ENCODE measurements at regions of chr7 and their contacts with region 1.

Region 1: DNA sequence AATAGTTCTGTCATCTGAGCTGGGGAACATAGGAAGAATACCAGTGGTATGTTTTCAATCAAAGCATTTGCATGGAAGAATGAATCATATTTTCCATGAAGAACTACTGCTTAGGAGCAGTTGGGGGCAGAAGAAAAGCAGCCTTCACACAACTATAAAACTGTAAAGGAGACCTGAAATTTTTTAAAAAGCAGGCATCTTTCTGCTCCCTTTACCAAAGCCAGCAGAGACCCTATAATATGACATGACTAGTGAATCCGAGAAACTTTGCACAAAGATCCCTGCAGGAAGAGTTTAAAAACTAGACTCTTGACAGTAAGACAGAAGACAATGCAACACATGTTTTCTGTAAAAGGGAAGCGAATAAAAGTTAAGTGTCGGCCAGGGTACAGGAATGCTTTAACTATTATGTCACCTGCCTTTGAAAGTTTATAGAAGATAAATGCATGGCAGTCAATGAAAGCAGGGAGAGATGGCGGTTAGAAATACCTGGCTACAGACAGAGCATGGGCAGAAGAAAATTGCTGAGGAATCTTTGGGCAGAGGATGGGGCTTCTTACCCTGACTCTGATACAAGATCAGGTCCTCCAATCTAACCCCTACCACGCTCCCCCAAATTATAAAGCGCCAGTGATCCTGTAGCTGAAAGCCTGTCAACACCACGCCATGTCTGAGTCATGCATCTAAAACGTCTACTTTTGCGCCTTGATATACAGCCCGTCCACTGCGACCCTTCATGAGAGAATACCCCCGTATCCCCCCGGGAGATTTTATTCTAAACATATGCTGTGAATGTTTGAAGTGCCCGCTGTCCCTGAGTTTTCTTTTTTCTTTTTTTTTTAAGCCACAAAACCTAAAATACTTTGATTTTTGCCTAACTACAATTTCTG is 93.1 kb downstream of the GLI3 start:
- DNase-seq: no peak
- ATAC-seq: no peak
- H3K4me3 ChIP-seq: no peak overlapping the region
- H3K27ac ChIP-seq: no peak overlapping the region
- H3K4me1 ChIP-seq: no peaks in the 10 kb centered on the region
- H3K27me3 ChIP-seq: no peaks in the 10 kb centered on the region

Region 2: GRCh38 chr7:42237162-42237821 is 93.3 kb after region 1 on chr7 and contains the start of gene GLI3:
- intact Hi-C with region 1: loop called in 1 of 2 experiments (anchors 10 kb)
- DNase-seq: peak; percentile 90 to 94
- ATAC-seq: peak; percentile 88
- H3K4me3 ChIP-seq: peak within 1 kb of the TSS; percentile 86 to 90
- H3K27ac ChIP-seq: peak within 1 kb of the TSS; percentile 68 to 91
- H3K4me1 ChIP-seq: no peaks in the 10 kb centered on the region
- H3K27me3 ChIP-seq: no peaks in the 10 kb centered on the region
- total RNA-seq, gene GLI3: 21.3 to 34.9 TPM

Measured in aorta (tissue), 5 donors.